Cardiac septum (tissue), 1 donor: ENCODE measurements at regions of chr6 and their contacts with region 1.

Region 1: GRCh38 chr6:73969971-73970970 is 274.3 kb downstream of the CD109 start:
- DNase-seq: no peak

Region 2: GRCh38 chr6:73704260-73704659 is 266.0 kb before region 1 on chr6:
- intact Hi-C with region 1: no loop called
- DNase-seq: no peak

Region 3: GRCh38 chr6:73854998-73855718 is 115.1 kb before region 1 on chr6:
- intact Hi-C with region 1: loop called (anchors 10 kb)
- DNase-seq: no peak

Region 4: GRCh38 chr6:73923905-73924485 is 46.3 kb before region 1 on chr6:
- intact Hi-C with region 1: no loop called
- DNase-seq: no peak